Activated T-helper 2 cell treated with anti-CD3 and anti-CD28 coated beads, Interferon-gamma antibody, Interleukin-2, Interleukin-4, amounts not matched to agents 10 μg/mL and 5 μg/mL and 100 μg/mL, durations not matched to agents 14 hours and 24 hours and 36 hours (primary cell): ENCODE measurements at regions of chr1 and their contacts with region 1.

Region 1: DNA sequence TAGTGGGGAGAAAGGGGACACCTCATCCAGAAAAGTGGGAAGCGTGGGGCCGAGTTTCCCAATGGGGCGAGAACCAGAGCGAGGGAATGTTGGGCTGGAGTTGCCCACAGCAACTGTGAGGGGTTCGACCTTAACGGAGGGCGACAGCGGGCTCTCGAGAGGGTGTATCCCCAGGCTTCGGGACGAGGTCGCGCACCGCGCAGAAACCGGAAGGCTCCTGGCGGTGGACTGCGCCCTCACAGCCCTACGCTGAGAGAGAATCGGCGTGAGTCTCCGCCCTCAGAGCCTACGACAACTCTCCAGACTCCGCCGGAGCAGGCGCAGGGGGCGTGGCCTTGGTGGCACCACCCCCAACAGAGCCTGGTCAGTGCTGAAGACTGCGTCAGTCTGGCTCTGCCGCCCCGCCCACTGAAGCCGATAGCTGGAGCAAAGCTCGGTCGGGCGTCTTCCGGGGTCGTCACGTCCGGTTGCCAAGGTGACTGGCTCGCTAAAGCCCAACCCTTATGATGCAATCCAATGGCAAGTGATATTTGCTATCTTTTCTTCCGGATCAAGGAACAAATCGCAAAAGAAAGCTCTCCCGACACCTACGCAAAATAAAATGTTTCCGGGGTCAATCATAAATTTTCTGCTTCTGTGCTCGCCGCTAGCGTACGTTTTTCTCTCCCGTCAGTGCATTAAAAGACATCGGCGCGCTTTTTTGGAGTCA is at the start of gene LRIF1:
- DNase-seq: peak; percentile 100
- H3K4me3 Mint-ChIP-seq: peak within 1 kb of the TSS; percentile 89
- H3K27ac Mint-ChIP-seq: peak within 1 kb of the TSS; percentile 95
- H3K4me1 Mint-ChIP-seq: peaks cover 36% of the 10 kb centered on the region
- H3K27me3 Mint-ChIP-seq: peaks cover 13% of the 10 kb centered on the region
- total RNA-seq, gene LRIF1: 15.2 and 15.7 TPM in 2 replicates

Region 2: DNA sequence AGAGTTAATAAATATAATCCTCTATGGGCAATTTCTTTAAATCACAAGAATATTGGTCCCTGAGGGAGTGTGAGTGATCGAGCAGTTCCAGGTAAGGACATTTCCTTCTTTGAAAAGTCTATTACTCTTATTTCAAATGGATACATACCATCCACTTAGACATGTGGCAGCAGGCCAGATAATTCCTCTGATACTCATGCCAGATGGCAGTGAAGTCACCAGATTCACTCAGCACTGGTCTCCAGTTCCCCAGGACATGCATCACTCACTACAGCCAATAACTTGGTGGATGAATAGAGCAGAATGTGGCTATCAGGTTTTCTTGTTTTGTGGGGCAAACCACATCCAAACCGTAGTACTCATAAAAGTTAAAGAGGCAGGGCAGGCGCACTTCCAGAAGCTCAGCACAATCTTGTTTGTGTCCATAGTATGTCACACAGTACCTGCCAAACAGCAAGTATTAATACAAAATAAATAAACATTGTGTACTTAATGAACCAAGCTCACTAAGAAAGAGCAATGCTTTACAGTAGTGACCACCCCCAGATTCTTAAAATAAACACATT is 165.1 kb before region 1 on chr1:
- intact Hi-C with region 1: no loop called
- DNase-seq: no peak
- H3K4me3 Mint-ChIP-seq: no peak overlapping the region
- H3K27ac Mint-ChIP-seq: no peak overlapping the region
- H3K4me1 Mint-ChIP-seq: no peaks in the 10 kb centered on the region
- H3K27me3 Mint-ChIP-seq: peaks cover 44% of the 10 kb centered on the region

Region 3: DNA sequence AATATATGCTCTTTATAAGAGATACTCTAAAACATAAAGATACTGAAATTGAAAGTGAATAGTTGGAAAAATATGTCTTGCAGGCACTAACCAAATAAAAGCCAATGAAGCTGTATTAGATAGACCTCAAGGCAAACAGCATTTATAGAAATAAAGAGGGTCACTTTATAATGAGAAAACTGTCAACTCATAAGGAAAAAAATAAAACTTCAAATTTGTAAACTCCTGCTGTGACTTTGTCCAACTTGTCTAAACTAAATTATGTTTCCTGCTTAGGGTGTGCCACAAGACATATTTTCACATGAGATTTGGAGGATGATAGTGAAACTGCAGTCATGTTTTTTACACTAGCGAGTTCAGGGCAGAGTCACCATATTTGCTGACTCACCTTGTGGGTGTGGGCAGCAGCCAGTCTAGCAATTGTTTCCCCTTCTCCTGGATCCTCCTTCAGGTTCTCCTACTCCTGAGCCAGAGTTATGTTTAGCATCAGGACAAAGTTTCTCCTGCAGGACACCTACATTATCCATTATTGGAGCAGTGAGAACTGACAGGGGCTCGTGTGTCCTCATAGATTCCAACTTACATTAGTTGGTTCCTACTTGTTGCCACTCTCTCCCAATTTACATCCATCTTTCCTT is 47.1 kb before region 1 on chr1:
- intact Hi-C with region 1: loop called (anchors 5 kb)
- DNase-seq: peak; percentile 40
- H3K4me3 Mint-ChIP-seq: peak overlapping the region; percentile 42
- H3K27ac Mint-ChIP-seq: peak overlapping the region; percentile 13
- H3K4me1 Mint-ChIP-seq: peaks cover 19% of the 10 kb centered on the region
- H3K27me3 Mint-ChIP-seq: no peaks in the 10 kb centered on the region

Region 4: GRCh38 chr1:111006541-111006940 is 42.7 kb after region 1 on chr1:
- intact Hi-C with region 1: no loop called
- DNase-seq: no peak
- H3K4me3 Mint-ChIP-seq: no peak overlapping the region
- H3K27ac Mint-ChIP-seq: no peak overlapping the region
- H3K4me1 Mint-ChIP-seq: no peaks in the 10 kb centered on the region
- H3K27me3 Mint-ChIP-seq: peaks cover 7% of the 10 kb centered on the region

Region 5: DNA sequence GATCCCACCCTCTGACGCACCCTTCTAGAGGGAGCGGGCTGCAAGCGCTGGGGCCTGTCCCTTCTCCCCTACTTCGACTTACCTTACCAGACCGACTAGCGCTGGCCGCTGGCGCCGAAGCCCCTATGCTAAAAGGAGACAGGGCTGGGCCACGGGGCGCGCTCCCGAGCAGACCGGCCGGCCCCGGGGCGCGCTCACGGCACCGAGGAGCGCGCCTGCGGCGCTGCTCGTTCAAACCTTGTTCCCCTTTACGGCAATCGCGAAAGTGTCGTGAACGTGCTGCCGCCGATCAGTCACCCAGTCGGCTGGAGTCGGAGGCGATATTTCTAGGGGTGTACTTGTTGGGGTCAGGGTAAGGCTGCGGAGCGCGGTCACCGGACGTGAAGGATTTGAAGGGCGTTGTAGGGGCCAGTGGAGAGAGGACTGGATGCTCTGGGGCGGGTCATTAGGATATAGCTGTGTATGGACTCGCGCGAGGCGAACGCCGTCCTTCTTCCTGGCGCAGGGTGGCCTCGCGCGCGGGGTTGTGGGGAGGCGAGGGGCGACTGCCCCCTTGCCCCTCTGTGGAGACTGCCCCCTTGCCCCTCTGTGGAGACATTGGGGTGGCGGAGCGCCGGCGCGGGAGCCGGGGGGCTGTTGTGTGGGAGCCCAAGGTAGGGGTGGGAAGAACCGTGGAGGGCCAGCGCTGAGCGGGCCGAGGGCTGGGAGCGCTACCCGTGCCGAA is 176.3 kb after region 1 on chr1 and contains the starts of genes CEPT1 and DRAM2:
- intact Hi-C with region 1: loop called (anchors 1 kb)
- DNase-seq: peak; percentile 91
- H3K4me3 Mint-ChIP-seq: peak within 1 kb of the TSS; percentile 96
- H3K27ac Mint-ChIP-seq: peak within 1 kb of the TSS; percentile 92
- H3K4me1 Mint-ChIP-seq: peaks cover 36% of the 10 kb centered on the region
- H3K27me3 Mint-ChIP-seq: no peaks in the 10 kb centered on the region
- total RNA-seq, gene CEPT1: 29.8 and 34.8 TPM in 2 replicates
- total RNA-seq, gene DRAM2: 22.9 and 24.7 TPM in 2 replicates